Right cardiac atrium (tissue), 5 donors: ENCODE measurements at regions of chr6 and their contacts with region 1.

Region 1: DNA sequence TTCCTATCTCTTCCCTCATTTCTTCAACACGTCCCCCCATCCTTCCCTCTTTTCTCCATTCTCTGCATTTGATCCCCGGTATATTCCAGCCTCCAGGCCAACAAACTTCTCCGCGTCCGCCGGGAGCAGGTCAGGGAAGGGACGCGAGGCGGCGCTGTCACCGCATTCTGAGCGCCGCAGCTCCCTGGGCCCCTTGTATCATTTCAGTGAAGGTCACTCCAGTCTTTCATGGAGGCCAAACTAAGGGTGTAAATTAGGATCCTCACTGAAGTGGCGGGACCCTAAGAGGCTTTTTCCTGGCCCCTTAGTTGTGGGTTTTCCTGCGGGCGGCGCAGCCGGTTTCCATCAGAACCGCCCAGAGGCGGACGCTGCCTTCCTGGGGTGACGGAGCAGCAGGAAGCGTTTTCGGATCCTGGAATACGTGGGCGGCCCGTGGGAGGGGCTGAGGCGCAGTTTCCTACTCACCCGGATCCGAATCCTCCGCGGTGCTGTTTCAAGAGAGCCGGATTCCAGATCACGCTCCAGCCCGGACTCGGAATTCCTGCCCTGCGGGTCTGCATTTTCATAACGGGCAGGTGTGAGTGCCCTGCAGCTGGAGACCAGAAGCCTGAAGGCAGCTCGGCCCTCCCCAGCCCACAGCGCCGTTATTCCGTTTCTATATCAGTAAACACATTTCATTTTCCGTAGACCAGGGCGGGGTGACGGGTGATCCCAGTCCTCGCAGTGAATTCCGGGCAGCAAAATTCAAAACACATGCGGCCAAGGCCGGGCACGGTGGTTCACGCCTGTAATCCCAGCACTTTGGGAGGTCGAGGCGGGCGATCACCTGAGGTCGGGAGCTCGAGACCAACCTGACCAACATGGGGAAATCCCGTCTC is 3.6 kb upstream of the MICA start:
- DNase-seq: peak; percentile 95 to 98 (median 96)
- ATAC-seq: peak; percentile 89 to 91
- H3K4me3 ChIP-seq: peak overlapping the region; percentile 95
- H3K27ac ChIP-seq: peak overlapping the region; percentile 100
- H3K4me1 ChIP-seq: peaks cover 5% of the 10 kb centered on the region
- H3K27me3 ChIP-seq: no peaks in the 10 kb centered on the region

Region 2: GRCh38 chr6:31441365-31442267 is 41.8 kb after region 1 on chr6:
- intact Hi-C with region 1: loop called (anchors 2 to 5 kb)
- DNase-seq: peak; percentile 83 to 95 (median 93)
- ATAC-seq: peak; percentile 96 to 98
- H3K4me3 ChIP-seq: no peak overlapping the region
- H3K27ac ChIP-seq: no peak overlapping the region
- H3K4me1 ChIP-seq: no peaks in the 10 kb centered on the region
- H3K27me3 ChIP-seq: no peaks in the 10 kb centered on the region